WTC11 (cell line): ENCODE measurements at regions of chr13 and their contacts with region 1.

Region 1: GRCh38 chr13:112638157-112638750 is 50.3 kb upstream of the TUBGCP3 start:
- DNase-seq: no peak
- ATAC-seq: no peak
- H3K4me3 Mint-ChIP-seq: no peak overlapping the region
- H3K27ac Mint-ChIP-seq: no peak overlapping the region; the same call in 1 of the 2 replicates
- H3K4me1 Mint-ChIP-seq: peaks cover 30% of the 10 kb centered on the region
- H3K27me3 Mint-ChIP-seq: peaks cover 33% of the 10 kb centered on the region
- CTCF ChIP-seq: no peak

Region 2: GRCh38 chr13:112333756-112334543 is 304.3 kb before region 1 on chr13:
- CTCF ChIA-PET with region 1: no interaction called
- POLR2A ChIA-PET with region 1: no interaction called
- DNase-seq: no peak
- ATAC-seq: no peak
- H3K4me3 Mint-ChIP-seq: no peak overlapping the region
- H3K27ac Mint-ChIP-seq: no peak overlapping the region
- H3K4me1 Mint-ChIP-seq: peaks cover 16% of the 10 kb centered on the region
- H3K27me3 Mint-ChIP-seq: peaks cover 65% of the 10 kb centered on the region
- CTCF ChIP-seq: no peak

Region 3: DNA sequence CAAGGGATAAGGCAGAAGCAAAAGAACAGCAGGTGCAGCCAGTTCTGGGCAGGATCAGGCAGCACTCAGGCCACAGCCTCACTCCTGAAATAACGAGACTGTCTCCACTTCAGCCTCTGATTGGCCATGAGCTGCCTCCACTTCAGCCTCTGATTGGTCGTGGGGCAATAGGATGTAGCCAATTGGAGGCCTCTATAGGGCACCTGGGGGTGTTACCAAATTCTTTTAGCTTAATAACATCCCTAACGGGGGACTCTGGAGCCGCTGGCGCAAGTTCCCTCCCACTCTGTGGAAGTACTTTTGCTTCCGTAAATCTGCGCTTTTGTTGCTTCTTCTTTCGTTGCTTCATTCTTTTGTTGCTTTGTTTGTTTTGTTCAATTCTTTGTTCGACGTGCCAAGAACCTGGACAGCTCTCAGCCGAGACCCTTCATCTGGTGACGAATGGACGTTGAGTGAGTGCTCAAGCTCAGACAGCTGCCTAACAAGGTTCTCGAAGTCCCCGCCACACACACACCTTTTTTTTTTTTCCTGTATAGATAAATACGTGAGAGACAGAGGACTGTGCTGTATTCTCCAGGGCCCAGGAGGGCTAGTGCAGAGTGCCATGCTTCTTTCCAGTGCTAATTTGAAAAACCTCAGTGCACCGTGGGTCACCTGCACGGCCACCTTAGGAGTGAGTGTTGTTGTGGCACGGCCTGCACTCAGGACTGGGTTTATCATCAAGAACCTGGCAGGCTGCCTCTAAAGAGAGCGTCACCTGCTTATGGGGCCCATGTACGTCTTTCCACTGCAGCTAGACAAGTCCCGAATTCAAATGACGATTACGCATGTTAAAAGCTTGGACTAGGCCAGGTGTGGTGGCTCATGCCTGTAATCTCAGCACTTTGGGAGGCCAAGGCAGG is 18.3 kb before region 1 on chr13:
- CTCF ChIA-PET with region 1: interaction called, 11 read pairs
- POLR2A ChIA-PET with region 1: no interaction called
- DNase-seq: peak; percentile 47
- ATAC-seq: peak; percentile 95
- H3K4me3 Mint-ChIP-seq: peak overlapping the region; percentile 58
- H3K27ac Mint-ChIP-seq: no peak overlapping the region
- H3K4me1 Mint-ChIP-seq: peaks cover 3% of the 10 kb centered on the region; the same call in 1 of the 2 replicates
- H3K27me3 Mint-ChIP-seq: peaks cover 4% of the 10 kb centered on the region
- CTCF ChIP-seq: no peak